Heart left ventricle (tissue), 16 donors: ENCODE measurements at regions of chr22 and their contacts with region 1.

Region 1: DNA sequence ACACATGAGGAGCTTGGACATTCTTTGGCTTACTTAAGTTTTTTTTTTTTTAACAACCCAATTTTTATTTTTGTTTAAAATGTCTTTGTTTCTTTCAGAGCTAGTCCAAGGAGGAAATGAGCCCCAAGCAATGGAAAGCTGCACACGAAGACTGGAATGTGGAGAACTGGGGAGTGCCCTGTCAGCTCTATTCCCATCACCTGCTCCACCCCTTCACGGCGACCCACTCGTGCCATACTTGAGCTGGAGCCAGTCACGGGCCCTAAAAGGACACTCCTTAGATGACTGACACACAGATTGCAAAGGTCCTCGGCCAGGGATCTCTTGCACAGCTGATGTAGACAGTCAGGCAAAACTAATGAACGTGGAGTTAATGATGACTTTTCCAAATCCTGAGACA is 10.6 kb upstream of the SLC25A18 start:
- DNase-seq: peak in 2 of 5 donors; percentile 62 to 65
- ATAC-seq: peak in 3 of 4 donors; percentile 56 to 67 (median 65)
- H3K4me3 ChIP-seq: no peak overlapping the region
- H3K27ac ChIP-seq: peak overlapping the region in 2 of 12 donors; percentile 7 to 28
- H3K4me1 ChIP-seq: peaks cover 0 to 5% (median 0%) of the 10 kb centered on the region in 12 donors
- H3K27me3 ChIP-seq: no peaks in the 10 kb centered on the region
- CTCF ChIP-seq: no peak
- POLR2A ChIP-seq: no peak

Region 2: DNA sequence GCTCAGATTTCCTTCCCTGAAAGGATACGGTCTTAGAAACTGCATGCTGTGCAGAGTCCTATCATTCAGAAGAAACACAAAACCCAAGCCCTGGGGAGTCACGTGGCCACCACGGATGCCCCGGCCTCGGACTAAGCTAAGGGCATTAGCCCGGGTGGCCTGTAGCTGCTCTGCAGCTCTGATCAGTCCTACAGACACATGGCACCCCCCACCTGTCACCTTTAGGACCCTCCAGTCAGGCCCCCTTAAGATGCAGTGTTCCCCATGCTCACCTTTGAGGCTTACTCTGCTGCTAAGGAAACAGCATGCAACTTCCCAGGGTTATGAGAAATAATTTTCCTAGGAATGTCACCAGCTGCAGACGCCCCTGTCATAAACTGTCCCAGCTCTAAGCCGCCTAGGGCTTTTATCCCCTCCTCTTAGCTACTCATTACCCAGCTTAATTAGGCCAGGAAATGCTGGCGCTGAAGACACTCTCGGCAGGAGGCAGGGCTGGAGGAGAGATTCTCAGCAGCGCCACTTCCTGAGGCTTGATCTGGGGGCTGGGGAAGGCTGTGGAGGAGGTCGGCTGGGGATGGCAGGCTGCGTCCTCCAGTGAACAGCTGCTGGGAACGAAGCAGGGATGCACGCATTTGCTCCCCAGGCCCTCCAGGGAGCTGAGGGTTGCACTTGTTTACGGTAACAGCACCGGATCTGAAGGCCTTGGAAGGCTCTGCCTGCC is 286.3 kb before region 1 on chr22:
- intact Hi-C with region 1: no loop called
- DNase-seq: peak; percentile 43 to 73 (median 65)
- ATAC-seq: peak; percentile 28 to 66 (median 43)
- H3K4me3 ChIP-seq: no peak overlapping the region
- H3K27ac ChIP-seq: peak overlapping the region in 9 of 12 donors; percentile 25 to 88 (median 69)
- H3K4me1 ChIP-seq: peaks cover 0 to 29% (median 3%) of the 10 kb centered on the region in 12 donors
- H3K27me3 ChIP-seq: peaks cover 0 to 7% (median 0%) of the 10 kb centered on the region in 9 donors
- CTCF ChIP-seq: no peak
- POLR2A ChIP-seq: no peak

Region 3: DNA sequence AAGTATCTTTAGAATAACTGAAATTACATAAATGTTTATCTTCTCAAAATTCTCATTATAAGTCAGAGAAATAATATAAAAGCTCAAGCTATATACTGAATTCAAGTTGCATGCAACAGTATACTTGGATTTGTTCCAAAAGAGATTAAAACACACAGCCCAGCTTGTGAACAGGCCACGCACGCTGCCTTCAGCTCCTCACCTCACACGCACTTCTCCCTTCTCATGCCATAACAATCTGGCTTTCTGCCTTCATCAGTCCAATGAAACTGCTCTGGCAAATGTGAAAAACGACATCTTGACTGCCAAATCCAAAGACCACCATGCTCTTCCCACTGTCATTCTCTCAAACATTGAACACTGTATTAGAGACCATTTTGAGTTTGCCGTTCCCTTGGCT is 53.8 kb after region 1 on chr22:
- intact Hi-C with region 1: no loop called
- DNase-seq: peak in 2 of 5 donors; percentile 44 to 50
- ATAC-seq: peak in 3 of 4 donors; percentile 72 to 81 (median 75)
- H3K4me3 ChIP-seq: no peak overlapping the region
- H3K27ac ChIP-seq: peak overlapping the region in 7 of 12 donors; percentile 21 to 78 (median 41)
- H3K4me1 ChIP-seq: peaks cover 0 to 34% (median 17%) of the 10 kb centered on the region in 12 donors
- H3K27me3 ChIP-seq: no peaks in the 10 kb centered on the region
- CTCF ChIP-seq: no peak
- POLR2A ChIP-seq: no peak

Region 4: DNA sequence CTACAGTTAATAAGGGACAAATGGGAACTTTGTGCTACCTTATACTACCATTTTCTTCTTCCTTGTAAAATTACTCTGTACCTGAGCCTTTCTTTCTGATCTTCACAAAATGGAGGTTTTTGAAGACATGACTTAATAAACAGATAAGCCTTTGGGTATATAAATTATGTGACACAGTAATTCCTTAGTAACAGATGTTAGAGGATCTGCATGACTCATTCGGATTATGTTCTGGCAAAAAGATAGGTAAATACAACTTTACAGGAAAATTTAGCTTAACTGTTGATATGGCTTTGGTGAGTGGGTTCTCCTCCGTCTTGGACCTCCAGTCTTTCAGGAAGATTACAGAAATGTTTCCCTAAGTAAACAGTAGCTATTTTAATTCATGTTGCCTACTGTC is 159.7 kb after region 1 on chr22:
- intact Hi-C with region 1: loop called in 1 of 10 experiments (anchors 10 kb)
- DNase-seq: no peak
- ATAC-seq: no peak
- H3K4me3 ChIP-seq: no peak overlapping the region
- H3K27ac ChIP-seq: no peak overlapping the region
- H3K4me1 ChIP-seq: peaks cover 0 to 10% (median 3%) of the 10 kb centered on the region in 12 donors
- H3K27me3 ChIP-seq: no peaks in the 10 kb centered on the region
- CTCF ChIP-seq: no peak
- POLR2A ChIP-seq: no peak

Region 5: DNA sequence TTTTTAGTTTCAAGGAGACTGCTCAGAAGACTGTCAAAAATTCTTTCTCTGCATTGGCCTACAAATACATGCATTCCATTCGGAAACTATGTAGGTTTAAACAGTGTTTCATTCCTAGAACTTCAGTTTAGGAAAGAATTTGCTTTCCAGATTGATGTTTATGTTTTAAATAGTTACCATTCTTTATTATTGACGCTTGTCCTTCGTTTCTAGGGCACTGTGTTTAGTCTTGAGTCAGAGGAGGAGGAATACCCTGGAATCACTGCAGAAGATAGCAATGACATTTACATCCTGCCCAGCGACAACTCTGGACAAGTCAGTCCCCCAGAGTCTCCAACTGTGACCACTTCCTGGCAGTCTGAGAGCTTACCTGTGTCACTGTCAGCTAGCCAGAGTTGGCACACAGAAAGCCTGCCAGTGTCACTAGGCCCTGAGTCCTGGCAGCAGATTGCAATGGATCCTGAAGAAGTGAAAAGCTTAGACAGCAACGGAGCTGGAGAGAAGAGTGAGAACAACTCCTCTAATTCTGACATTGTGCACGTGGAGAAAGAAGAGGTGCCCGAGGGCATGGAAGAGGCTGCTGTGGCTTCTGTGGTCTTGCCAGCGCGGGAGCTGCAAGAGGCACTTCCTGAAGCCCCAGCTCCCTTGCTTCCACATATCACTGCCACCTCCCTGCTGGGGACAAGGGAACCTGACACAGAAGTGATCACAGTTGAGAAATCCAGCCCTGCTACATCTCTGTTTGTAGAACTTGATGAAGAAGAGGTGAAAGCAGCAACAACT is 173.9 kb after region 1 on chr22:
- intact Hi-C with region 1: loop called in 4 of 10 experiments (anchors 10 kb)
- DNase-seq: peak in 2 of 5 donors; percentile 43 to 67
- ATAC-seq: peak; percentile 11 to 53 (median 34)
- H3K4me3 ChIP-seq: no peak overlapping the region
- H3K27ac ChIP-seq: peak overlapping the region in 11 of 12 donors; percentile 69 to 93 (median 83)
- H3K4me1 ChIP-seq: peaks cover 0 to 42% (median 9%) of the 10 kb centered on the region in 12 donors
- H3K27me3 ChIP-seq: no peaks in the 10 kb centered on the region
- CTCF ChIP-seq: no peak
- POLR2A ChIP-seq: no peak

Region 6: DNA sequence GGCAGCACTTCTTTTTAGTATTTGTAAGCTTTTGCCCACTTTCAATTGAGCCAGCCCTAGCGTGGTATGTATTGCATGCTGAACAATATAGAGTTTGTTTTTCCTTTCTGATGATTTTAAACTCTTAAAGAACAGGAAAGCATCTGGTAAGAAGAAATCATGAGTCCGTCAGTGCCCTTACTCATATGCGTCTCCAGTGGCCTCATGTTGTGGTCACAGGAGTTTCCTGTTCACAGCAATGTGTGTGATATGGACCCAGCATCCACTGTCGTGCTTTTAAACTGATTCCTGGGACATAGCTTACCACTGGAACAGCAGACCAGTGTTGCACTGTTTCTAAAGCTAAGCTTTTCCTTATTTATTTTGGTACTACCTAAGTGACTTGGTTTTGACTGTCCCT is 181.4 kb after region 1 on chr22:
- intact Hi-C with region 1: loop called in 4 of 10 experiments (anchors 10 kb)
- DNase-seq: no peak
- ATAC-seq: no peak
- H3K4me3 ChIP-seq: no peak overlapping the region
- H3K27ac ChIP-seq: peak overlapping the region in 1 of 12 donors; percentile 4
- H3K4me1 ChIP-seq: no peaks in the 10 kb centered on the region
- H3K27me3 ChIP-seq: no peaks in the 10 kb centered on the region
- CTCF ChIP-seq: no peak
- POLR2A ChIP-seq: no peak

Region 7: DNA sequence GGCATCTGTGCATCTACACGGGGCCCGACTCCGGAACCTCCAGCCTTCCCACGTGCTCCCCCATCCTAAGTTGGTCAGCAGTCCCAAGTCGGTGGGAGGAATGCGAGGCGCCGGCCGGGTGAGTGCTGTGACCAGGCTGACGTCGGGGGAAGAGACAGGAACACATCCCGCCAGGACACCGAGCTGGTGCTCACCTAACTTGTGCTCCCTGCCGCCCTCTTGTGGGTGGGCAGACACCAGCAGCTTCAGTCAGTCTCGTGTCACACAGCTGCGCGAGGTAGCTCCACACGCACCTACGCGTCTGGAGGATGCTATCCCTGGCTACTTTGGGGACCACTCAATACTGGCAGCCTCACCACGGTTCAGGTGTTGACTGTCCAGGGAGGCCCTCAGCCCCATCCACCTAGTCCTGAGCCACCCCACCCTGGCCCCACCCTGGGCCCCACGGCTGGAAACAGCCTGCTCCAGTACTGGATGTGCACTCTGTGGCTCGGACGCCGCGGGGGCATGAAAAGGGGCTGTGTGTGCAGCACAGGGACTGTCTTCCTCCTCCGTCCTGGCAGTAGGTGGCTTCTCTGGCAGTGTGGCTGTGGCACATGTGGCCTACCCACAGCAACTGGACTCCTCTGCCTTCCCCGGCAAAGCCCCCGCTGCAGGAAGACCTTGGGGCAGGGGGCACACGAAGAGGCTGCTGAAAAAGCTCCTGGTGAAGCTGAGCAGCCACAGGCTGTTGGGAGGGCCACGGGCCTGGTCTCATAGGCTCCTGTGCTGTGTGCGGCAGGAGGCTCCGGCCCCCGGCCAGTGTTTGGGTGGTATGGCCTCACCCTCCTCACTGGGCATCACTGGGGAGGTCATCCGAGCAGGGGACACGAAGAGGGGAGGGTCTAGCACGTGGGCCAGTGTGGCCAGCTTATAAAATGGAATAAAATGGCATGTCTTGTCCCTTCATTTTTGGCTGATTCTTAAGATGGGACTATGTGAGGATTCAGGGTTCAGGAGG is 232.7 kb after region 1 on chr22:
- intact Hi-C with region 1: loop called in 1 of 10 experiments (anchors 5 kb)
- DNase-seq: peak in 4 of 5 donors; percentile 62 to 82 (median 70)
- ATAC-seq: peak in 3 of 4 donors; percentile 6 to 28 (median 18)
- H3K4me3 ChIP-seq: no peak overlapping the region
- H3K27ac ChIP-seq: peak overlapping the region; percentile 59 to 90 (median 84)
- H3K4me1 ChIP-seq: peaks cover 0 to 57% (median 29%) of the 10 kb centered on the region in 12 donors
- H3K27me3 ChIP-seq: no peaks in the 10 kb centered on the region
- CTCF ChIP-seq: peak; percentile 25 to 65 (median 48)
- POLR2A ChIP-seq: no peak

Region 8: DNA sequence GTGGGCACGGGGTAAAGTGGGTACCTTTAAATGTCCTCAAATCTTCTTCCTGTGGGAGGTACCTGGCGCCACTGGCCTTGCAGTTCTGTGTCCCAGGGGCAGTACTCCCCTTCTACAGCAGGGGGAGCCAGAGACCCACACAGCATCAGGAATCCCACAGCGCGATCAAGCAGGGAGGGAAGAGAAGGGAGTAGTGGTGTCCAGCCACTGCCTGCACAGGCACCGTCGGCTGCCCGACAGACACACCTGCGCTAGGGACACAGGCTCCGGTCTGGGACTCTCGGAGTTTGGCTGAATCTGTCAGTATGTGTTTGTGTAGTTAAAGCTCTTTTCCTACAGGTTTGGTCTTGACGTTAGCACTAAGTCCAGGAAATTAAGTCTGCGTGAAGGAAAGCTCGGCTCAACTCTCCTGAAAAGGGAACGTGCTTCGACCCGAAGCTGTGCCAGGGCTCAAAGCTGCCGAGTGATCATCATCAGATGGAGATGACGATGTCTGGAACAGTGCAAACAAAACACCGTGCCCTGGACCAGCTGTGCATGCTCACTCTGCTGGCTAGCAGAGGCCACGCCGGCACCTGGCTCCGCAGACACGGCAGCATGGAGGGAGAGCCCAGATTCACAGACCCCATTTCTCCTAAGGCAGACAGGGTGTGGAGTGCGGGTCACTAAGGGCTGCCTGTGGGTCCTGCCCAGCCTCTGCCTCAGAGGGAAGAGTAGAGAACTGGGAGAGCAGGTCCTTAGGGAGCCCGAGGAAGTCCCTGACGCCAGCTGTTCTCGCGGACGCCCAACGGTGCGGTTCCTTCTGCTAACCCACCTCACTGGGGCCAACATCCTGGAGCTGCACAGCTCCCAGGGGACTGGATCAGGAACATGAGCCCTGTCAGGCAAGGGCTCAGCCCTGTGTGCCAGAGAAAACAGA is 277.6 kb after region 1 on chr22:
- intact Hi-C with region 1: no loop called
- DNase-seq: peak; percentile 83 to 87 (median 85)
- ATAC-seq: peak; percentile 69 to 81 (median 74)
- H3K4me3 ChIP-seq: no peak overlapping the region
- H3K27ac ChIP-seq: peak overlapping the region in 8 of 12 donors; percentile 49 to 79 (median 66)
- H3K4me1 ChIP-seq: peaks cover 4 to 63% (median 28%) of the 10 kb centered on the region in 12 donors
- H3K27me3 ChIP-seq: no peaks in the 10 kb centered on the region
- CTCF ChIP-seq: peak; percentile 95 to 100 (median 99)
- POLR2A ChIP-seq: no peak